ENCODE measurements at regions of chr16 and their contacts with region 1.

Region 1: GRCh38 chr16:73071131-73071940 is 23.4 kb upstream of the ZFHX3 start:
- DNase-seq: no peak
- H3K4me3 ChIP-seq: peak overlapping the region; percentile 29 to 42
- H3K27ac ChIP-seq: peak overlapping the region; percentile 45
- H3K4me1 ChIP-seq: peaks cover 43% of the 10 kb centered on the region
- H3K27me3 ChIP-seq: no peaks in the 10 kb centered on the region
- CTCF ChIP-seq: no peak
- POLR2A ChIP-seq: no peak

Region 2: DNA sequence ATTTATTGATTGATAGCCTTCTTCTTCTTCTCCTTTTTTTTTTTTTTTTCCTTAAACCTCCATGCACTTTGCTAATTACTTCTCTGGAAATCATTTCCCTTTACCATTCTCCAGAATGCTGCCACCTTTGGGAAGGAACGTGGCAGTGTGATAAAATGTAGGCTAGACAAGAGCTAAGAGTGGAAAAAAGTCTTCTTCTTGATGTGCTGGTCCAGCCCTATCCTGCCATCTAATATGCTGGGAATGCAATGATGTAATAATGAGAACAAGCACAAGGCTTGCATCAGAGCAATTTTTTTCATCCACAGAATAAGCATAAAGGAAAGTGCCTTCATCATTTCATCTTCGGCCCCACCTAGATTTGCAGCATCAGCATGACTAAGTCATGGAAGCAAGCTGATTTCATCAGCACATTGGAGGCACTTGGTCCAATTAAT is 105.3 kb after region 1 on chr16:
- intact Hi-C with region 1: loop called (anchors 5 kb)
- DNase-seq: no peak
- H3K4me3 ChIP-seq: no peak overlapping the region
- H3K27ac ChIP-seq: no peak overlapping the region
- H3K4me1 ChIP-seq: peaks cover 28% of the 10 kb centered on the region
- H3K27me3 ChIP-seq: no peaks in the 10 kb centered on the region
- CTCF ChIP-seq: no peak
- POLR2A ChIP-seq: no peak